ENCODE measurements at regions of chr15 and their contacts with region 1.

Region 1: DNA sequence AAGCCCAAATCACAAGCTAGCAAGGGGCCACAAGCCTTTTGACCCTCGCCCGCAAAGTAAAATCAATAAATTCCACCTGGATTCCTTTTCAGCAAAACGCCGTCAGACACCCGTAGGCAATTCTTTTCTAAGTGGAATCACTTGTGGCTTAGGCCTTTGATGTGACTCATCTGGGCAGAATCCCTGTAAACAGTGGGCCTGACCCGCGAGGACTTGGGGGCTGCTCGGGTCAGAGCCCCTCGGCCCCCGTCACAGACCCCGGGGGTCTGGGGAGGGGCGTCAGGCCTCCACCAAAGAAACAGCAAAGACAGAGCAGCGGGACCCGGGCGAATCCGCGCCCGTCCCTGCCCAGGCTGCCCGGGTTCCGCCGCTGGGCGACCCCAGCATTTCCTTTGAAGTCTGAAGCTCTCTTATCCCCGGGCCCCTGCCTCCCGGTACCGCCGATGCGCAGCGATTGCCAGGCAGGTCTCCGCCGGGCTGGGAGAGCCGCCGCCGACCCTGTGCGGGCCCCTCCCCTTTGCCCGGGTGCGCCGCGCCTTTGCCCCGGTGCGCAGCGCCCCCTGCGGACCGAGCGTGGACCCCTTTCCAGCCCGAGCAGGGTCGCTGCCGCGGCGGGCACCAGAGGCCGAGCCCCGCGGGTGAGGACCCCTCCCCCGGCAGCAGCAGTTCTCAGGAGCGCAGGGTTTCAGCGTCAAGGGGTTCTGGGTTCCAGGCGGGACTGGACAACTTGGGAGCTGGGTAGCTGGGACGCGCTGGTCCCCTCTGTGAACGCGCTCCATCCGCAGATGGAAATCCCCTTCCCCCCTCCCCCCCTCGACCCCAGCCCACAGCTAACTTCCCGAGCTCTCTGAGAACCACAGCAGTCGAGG is 178.3 kb downstream of the UACA start:
- DNase-seq: no peak
- H3K4me3 ChIP-seq: peak overlapping the region; percentile 19
- CTCF ChIP-seq: peak; percentile 57

Region 2: GRCh38 chr15:70466895-70467529 is 118.1 kb before region 1 on chr15:
- in situ Hi-C with region 1: no loop called
- DNase-seq: peak; percentile 40
- H3K4me3 ChIP-seq: no peak overlapping the region
- CTCF ChIP-seq: peak; percentile 88

Region 3: DNA sequence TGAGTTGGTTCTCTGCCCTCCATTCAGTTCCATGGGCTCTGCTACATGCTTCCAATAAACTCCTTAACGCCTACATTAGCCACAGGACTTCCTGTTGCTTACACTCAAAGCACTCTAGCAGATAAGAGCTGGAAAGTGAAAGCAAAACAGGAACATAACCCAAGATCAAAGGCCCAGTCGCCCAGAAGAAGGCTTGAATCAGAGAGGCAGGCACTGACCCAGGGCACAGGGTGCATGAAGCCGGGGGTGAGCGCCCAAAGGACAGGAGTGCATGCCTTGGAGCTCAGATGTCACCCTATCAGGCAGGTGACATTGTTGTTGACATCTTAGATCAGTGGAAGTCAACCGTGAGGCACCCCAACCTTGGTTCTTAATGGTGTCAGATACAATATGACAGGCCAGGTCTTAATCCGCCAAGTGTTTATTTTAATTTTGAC is 56.8 kb before region 1 on chr15:
- in situ Hi-C with region 1: loop called (anchors 5 kb)
- DNase-seq: no peak
- H3K4me3 ChIP-seq: no peak overlapping the region
- CTCF ChIP-seq: no peak

Region 4: GRCh38 chr15:70670680-70671079 is 85.6 kb after region 1 on chr15:
- in situ Hi-C with region 1: no loop called
- DNase-seq: peak; percentile 8
- H3K4me3 ChIP-seq: no peak overlapping the region
- CTCF ChIP-seq: no peak

Measured in astrocyte of the cerebellum (primary cell).